Heart right ventricle (tissue), 16 donors: ENCODE measurements at regions of chr5 and their contacts with region 1.

Region 1: GRCh38 chr5:132064738-132065331 is 4.4 kb downstream of the IL3 start:
- DNase-seq: peak; percentile 49 to 71
- ATAC-seq: peak; percentile 45 to 86 (median 70)
- H3K4me3 ChIP-seq: no peak overlapping the region
- H3K27ac ChIP-seq: no peak overlapping the region
- H3K4me1 ChIP-seq: peaks cover 0 to 8% (median 0%) of the 10 kb centered on the region in 9 donors
- H3K27me3 ChIP-seq: no peaks in the 10 kb centered on the region
- CTCF ChIP-seq: peak; percentile 75 to 95 (median 90)

Region 2: DNA sequence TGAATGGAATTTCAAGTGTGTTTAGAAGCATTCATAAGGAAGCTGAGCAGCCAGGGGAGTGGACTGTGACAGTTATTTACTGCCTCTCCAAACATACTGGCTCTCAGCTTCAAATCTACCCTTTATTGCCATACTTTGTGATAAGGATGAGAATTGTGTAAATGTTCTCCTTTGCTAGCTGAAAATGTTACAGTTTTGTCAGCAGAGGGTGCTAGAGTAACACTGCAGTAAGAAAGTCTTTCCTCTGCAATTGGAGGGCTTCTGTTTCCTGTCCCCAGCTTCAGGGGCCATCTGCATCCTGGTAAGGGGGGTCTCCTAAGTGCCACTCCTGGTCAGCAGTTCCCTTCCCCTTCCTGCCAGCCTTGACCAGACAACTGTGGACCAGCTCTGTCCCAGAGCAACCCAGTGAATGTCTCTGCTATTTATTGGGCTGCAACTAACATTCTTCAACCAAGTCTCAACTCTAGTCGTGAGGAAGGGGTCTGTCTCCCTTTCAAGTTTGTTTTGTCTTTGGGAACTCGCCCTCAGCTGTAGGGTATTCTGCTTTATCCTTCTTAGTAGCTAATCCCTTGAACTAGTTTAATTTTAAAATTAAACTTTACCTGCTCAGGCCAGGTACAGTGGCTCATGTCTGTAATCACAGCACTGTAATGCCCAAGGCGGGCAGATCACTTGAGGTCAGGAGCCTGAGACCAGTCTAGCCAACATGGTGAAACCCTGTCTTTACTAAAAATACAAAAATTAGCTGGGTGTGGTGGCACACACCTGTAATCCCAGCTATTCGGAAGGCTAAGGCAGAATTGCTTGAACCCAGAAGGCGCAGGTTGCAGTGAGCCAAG is 475.1 kb before region 1 on chr5:
- intact Hi-C with region 1: loop called in 7 of 10 experiments (anchors 1 to 10 kb)
- DNase-seq: no peak
- ATAC-seq: peak in 6 of 8 donors; percentile 29 to 79 (median 65)
- H3K4me3 ChIP-seq: no peak overlapping the region
- H3K27ac ChIP-seq: no peak overlapping the region
- H3K4me1 ChIP-seq: peaks cover 0 to 24% (median 20%) of the 10 kb centered on the region in 9 donors
- H3K27me3 ChIP-seq: no peaks in the 10 kb centered on the region
- CTCF ChIP-seq: peak; percentile 77 to 95 (median 87)

Region 3: GRCh38 chr5:131810510-131811249 is 254.2 kb before region 1 on chr5:
- intact Hi-C with region 1: loop called in 1 of 10 experiments (anchors 5 kb)
- DNase-seq: no peak
- ATAC-seq: peak; percentile 79 to 92 (median 86)
- H3K4me3 ChIP-seq: no peak overlapping the region
- H3K27ac ChIP-seq: peak overlapping the region in 6 of 10 donors; percentile 18 to 85 (median 70)
- H3K4me1 ChIP-seq: peaks cover 0 to 28% (median 8%) of the 10 kb centered on the region in 9 donors
- H3K27me3 ChIP-seq: no peaks in the 10 kb centered on the region
- CTCF ChIP-seq: peak in 7 of 9 donors; percentile 29 to 62 (median 42)

Region 4: DNA sequence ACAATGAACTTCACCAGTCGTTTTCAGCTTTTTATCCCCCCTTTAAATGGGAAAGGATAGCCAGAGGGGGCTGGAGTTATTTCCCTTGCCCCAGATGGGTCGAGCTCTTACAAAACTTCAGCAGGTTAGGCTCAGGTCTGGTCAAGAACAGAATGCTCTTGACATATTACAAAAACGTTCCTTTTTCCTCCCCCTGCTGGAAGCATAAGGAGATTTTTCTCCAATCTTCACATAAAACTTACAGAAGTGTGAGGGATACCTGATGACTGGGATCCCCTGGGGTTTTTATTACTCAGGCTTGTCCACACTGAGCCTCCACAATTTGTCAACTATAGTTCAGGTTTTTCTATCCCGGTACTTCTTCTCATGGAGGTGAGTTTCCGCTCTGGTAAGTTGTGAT is 69.5 kb after region 1 on chr5:
- intact Hi-C with region 1: loop called in 9 of 10 experiments (anchors 2 to 10 kb)
- DNase-seq: no peak
- ATAC-seq: no peak
- H3K4me3 ChIP-seq: no peak overlapping the region
- H3K27ac ChIP-seq: no peak overlapping the region
- H3K4me1 ChIP-seq: no peaks in the 10 kb centered on the region
- H3K27me3 ChIP-seq: peaks cover 0 to 6% (median 0%) of the 10 kb centered on the region in 7 donors
- CTCF ChIP-seq: peak in 6 of 9 donors; percentile 15 to 39 (median 24)

Region 5: GRCh38 chr5:132190161-132190817 is 125.5 kb after region 1 on chr5:
- intact Hi-C with region 1: loop called in 3 of 10 experiments (anchors 10 kb)
- DNase-seq: peak in 1 of 2 donors; percentile 55
- ATAC-seq: peak; percentile 85 to 96 (median 92)
- H3K4me3 ChIP-seq: no peak overlapping the region
- H3K27ac ChIP-seq: no peak overlapping the region
- H3K4me1 ChIP-seq: peaks cover 0 to 11% (median 0%) of the 10 kb centered on the region in 9 donors
- H3K27me3 ChIP-seq: no peaks in the 10 kb centered on the region
- CTCF ChIP-seq: peak; percentile 57 to 85 (median 74)

Region 6: GRCh38 chr5:132850066-132850465 is 785.2 kb after region 1 on chr5:
- intact Hi-C with region 1: no loop called
- DNase-seq: no peak
- ATAC-seq: no peak
- H3K4me3 ChIP-seq: no peak overlapping the region
- H3K27ac ChIP-seq: no peak overlapping the region
- H3K4me1 ChIP-seq: peaks cover 0 to 16% (median 0%) of the 10 kb centered on the region in 9 donors
- H3K27me3 ChIP-seq: no peaks in the 10 kb centered on the region
- CTCF ChIP-seq: no peak